ENCODE measurements at regions of chr4 and their contacts with region 1.

Region 1: DNA sequence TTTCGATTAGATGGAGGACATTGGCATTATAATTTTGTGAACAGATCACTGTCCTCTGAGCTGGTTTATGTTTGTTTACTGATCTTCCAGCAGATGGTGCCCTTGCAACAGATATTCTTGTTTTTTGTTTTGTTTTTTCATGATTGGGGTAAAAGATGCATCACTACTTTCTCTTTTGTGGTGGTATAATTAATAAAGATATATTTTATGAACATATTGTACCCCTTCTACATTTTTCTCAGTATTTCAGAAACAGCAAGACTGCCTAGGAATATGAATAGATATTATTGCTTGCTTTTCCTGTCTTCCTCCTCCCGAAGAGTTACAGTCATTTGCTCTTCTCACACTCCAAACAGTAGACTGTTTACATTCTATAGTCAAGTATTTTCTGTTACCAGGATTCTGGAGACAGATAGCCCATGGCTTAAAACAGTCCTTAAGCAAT is 905.2 kb downstream of the TRAM1L1 start:
- DNase-seq: peak; percentile 10
- ATAC-seq: peak; percentile 59; the same call in 1 of the 2 replicates
- H3K4me3 ChIP-seq: no peak overlapping the region
- H3K27ac ChIP-seq: no peak overlapping the region
- H3K4me1 ChIP-seq: no peaks in the 10 kb centered on the region
- H3K27me3 ChIP-seq: no peaks in the 10 kb centered on the region
- CTCF ChIP-seq: peak; percentile 42 to 64 (median 46); a peak in 4 of 6 replicates
- POLR2A ChIP-seq: no peak
- RAD21 ChIP-seq: peak; percentile 76

Region 2: GRCh38 chr4:116197317-116197809 is 17.2 kb after region 1 on chr4:
- CTCF ChIA-PET with region 1: no interaction called
- POLR2A ChIA-PET with region 1: no interaction called
- RAD21 ChIA-PET with region 1: no interaction called
- intact Hi-C with region 1: no loop called
- DNase-seq: no peak
- ATAC-seq: no peak
- H3K4me3 ChIP-seq: no peak overlapping the region
- H3K27ac ChIP-seq: no peak overlapping the region
- H3K4me1 ChIP-seq: no peaks in the 10 kb centered on the region
- H3K27me3 ChIP-seq: no peaks in the 10 kb centered on the region
- CTCF ChIP-seq: no peak
- POLR2A ChIP-seq: no peak
- RAD21 ChIP-seq: no peak

Region 3: DNA sequence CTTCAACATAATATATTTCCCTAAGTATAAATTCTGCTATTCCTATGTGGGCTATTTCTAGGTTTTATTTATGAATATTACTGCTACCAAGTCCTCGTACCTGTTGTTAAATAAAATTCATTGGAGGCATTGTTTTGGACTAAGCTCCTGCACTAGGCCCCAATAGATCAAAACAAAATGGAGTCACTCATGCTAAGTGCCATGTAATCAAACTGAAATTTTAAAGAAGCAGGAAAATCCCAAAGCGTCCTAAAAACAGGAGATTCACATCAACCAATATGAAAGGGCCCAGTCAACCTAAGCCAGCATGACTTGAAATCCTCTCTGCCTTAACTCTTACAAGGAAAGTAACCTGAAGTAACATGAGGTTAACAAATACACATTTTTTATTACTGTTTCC is 162.0 kb after region 1 on chr4:
- CTCF ChIA-PET with region 1: no interaction called
- POLR2A ChIA-PET with region 1: no interaction called
- RAD21 ChIA-PET with region 1: no interaction called
- intact Hi-C with region 1: no loop called
- DNase-seq: no peak
- ATAC-seq: no peak
- H3K4me3 ChIP-seq: no peak overlapping the region
- H3K27ac ChIP-seq: no peak overlapping the region
- H3K4me1 ChIP-seq: no peaks in the 10 kb centered on the region
- H3K27me3 ChIP-seq: no peaks in the 10 kb centered on the region
- CTCF ChIP-seq: no peak
- POLR2A ChIP-seq: no peak
- RAD21 ChIP-seq: no peak

Region 4: DNA sequence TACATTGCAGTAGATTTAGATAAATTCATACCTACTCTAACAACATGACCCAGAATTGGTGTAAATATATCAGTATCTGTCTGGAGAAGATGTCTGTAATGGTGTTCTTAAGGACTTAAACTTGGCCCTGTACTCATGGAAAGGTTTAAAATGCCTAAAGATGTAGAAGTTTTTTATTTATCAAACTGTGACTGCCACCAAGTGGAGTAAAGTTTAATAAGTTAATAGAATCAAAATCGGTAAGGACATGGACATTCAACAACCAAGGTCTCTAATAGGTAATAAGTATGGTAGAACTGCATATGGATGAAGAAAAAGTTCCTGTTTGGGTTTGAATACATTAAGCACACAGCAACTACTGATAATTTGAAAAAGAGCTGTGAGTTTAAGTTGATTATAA is 1380.2 kb after region 1 on chr4:
- CTCF ChIA-PET with region 1: no interaction called
- POLR2A ChIA-PET with region 1: no interaction called
- RAD21 ChIA-PET with region 1: no interaction called
- intact Hi-C with region 1: loop called (anchors 1 kb)
- DNase-seq: peak; percentile 7
- ATAC-seq: 0 out of 2 replicates have a peak, but pooled peaks have one; percentile 25
- H3K4me3 ChIP-seq: no peak overlapping the region
- H3K27ac ChIP-seq: no peak overlapping the region
- H3K4me1 ChIP-seq: no peaks in the 10 kb centered on the region
- H3K27me3 ChIP-seq: no peaks in the 10 kb centered on the region
- CTCF ChIP-seq: peak; percentile 5 to 40 (median 15); a peak in 4 of 6 replicates
- POLR2A ChIP-seq: no peak
- RAD21 ChIP-seq: peak; percentile 57

Region 5: GRCh38 chr4:118034053-118034785 is 1854.0 kb after region 1 on chr4 and contains the start of gene NDST3:
- CTCF ChIA-PET with region 1: interaction called, 7 read pairs
- POLR2A ChIA-PET with region 1: no interaction called
- RAD21 ChIA-PET with region 1: no interaction called
- intact Hi-C with region 1: loop called (anchors 2 kb)
- DNase-seq: peak; percentile 71
- ATAC-seq: peak; percentile 70
- H3K4me3 ChIP-seq: peak within 1 kb of the TSS; percentile 55 to 65
- H3K27ac ChIP-seq: peak within 1 kb of the TSS; percentile 56; the same call in 1 of the 2 replicates
- H3K4me1 ChIP-seq: peaks cover 5 to 12% of the 10 kb centered on the region in 2 experiments
- H3K27me3 ChIP-seq: no peaks in the 10 kb centered on the region
- CTCF ChIP-seq: peak; percentile 57 to 73 (median 63); a peak in 5 of 6 replicates
- POLR2A ChIP-seq: no peak
- RAD21 ChIP-seq: peak; percentile 91
- total RNA-seq, gene NDST3: not detected

Measured in HCT116 (cell line).